GM10248 (cell line): ENCODE measurements at regions of chr22 and their contacts with region 1.

Region 1: GRCh38 chr22:23315341-23315917 is 135.1 kb downstream of the BCR start:
- DNase-seq: peak; percentile 70
- CTCF ChIP-seq: peak; percentile 75

Region 2: DNA sequence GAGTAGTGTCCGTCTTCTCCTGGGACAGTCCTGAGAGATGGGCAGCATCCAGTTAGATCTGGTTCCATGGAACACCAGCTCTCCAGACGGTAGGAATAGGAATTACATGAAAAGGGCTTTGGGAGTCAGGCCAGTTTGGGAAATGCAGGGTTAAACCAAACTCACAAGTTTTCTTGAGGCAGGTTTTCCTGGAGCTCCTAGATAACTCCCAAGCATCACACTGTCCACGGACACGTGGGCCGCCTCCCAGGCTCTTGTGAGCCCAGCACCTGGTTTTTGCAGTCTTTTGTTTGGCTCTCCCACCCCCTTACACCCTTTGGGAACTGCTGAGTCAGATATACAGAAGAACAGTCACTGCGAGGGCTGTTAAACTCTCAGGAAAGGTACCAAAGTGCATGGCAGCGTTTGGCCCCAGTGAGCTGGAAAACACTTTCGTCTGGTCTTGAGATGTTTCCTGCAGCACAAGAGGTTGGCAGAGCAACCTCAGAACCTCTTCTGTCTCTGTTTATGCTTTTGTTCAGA is 45.2 kb before region 1 on chr22:
- CTCF ChIA-PET with region 1: no interaction called
- POLR2A ChIA-PET with region 1: no interaction called
- DNase-seq: no peak
- CTCF ChIP-seq: no peak

Region 3: DNA sequence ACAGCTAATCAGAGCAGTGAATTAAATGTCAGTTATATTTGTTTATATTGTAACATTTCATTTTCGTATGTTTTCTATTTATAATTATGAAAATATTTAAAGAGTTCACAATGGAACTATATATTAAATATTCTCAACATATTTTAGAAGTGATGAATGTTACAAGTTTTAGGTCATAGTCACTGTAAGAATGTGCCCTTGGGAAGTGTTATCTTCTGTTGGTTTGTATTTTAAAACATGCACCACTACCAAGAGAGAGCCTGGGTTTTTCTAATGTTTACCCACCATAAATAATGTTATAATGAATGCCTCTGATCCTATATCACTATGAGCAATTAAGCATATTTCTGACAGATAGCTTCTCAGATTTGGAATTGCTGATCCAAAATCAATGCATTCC is 35.9 kb after region 1 on chr22:
- CTCF ChIA-PET with region 1: no interaction called
- POLR2A ChIA-PET with region 1: no interaction called
- DNase-seq: no peak
- CTCF ChIP-seq: no peak

Region 4: GRCh38 chr22:23385291-23386244 is 70.1 kb after region 1 on chr22:
- CTCF ChIA-PET with region 1: interaction called, 20 read pairs
- POLR2A ChIA-PET with region 1: no interaction called
- DNase-seq: peak; percentile 92
- CTCF ChIP-seq: peak; percentile 99